Natural killer cell (primary cell): ENCODE measurements at regions of chr1 and their contacts with region 1.

Region 1: DNA sequence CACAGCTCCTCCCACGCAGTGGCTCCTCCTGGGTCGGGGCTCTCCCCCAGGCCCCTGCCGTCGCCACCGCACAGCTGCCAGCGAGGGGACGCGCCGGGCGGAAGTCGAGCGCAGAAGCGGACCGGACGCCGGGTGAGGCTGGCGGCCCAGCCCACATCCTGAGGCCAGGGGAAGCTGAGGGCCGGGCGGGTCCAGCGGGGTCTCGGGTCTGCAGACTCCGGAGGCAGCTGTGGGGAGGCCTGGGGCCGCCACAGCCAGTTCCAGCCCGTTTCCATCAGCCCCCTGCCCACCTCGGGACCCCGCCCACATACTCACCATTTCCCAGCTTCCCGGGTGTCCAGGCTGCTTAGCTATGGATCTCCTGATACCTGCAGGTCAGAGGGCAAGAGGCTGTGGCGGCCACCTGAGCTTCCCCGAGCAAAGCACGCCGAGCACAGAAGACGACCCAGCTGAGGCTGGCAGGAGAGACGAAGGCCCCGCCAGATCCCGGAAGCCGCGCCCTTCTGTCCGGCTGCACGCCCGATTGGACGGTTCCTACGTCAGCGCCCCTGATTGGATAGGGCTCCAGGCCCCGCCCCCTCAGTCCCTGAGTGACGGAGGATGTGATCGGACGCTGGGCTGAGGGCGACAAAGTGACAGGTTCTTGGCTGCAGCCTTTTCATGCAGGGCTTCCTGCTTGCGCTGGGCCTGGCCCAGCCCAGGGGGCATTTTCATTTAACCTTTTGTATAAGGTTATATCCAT is 38.7 kb upstream of the ZNF124 start:
- DNase-seq: peak; percentile 96 to 97
- ATAC-seq: peak; percentile 96 to 99 (median 97)
- H3K4me3 ChIP-seq: peak overlapping the region; percentile 97
- H3K4me3 Mint-ChIP-seq: peak overlapping the region; percentile 98
- H3K27ac ChIP-seq: peak overlapping the region; percentile 99
- H3K27ac Mint-ChIP-seq: peak overlapping the region; percentile 93 to 96
- H3K4me1 ChIP-seq: peaks cover 35% of the 10 kb centered on the region
- H3K4me1 Mint-ChIP-seq: peaks cover 47 to 53% of the 10 kb centered on the region in 2 donors
- H3K27me3 ChIP-seq: no peaks in the 10 kb centered on the region
- H3K27me3 Mint-ChIP-seq: peaks cover 0 to 3% of the 10 kb centered on the region in 2 donors
- CTCF ChIP-seq: no peak

Region 2: DNA sequence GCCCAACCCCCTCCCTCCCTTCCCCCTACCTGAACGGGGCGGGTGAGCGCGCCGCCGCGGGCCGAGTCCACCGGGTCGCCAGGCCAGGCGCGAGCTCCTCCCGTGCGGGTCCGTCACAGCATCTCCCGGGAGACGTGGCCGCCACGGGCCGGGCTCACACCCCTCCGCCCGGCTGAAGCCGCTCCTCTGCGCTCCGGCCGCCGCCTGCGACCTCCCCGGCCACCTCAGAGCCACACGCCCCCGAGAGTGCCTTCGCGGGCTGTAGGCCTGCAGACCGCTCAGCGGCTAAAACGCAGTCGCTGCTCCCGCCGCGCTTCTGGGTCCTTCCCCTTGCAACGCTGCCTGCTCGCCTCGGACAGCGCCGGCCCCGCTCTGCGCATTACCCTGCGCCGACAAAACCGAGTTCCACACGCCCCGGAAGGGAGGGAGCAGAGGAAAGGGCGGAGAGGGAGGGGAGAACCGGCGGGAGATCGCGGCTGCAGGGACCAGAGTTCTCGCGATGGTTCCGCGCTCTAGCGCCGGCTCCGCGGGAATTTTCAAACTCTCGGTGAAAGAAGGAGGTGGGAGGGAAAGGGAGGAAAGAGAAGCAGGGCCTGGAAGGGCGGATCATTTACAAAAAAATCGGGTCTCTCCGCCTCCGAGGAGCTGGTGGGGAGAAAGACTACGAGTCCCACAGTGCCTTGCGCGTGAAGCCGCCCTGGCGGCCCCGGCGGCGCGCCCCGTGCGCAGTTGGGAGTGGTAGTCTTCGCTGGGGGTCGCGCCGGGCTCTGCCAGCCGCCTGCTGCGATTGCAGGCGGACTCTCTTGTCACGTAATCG is 278.8 kb before region 1 on chr1 and contains the start of gene AHCTF1:
- intact Hi-C with region 1: loop called (anchors 2 kb)
- DNase-seq: peak; percentile 85 to 98
- ATAC-seq: peak; percentile 85 to 96 (median 88)
- H3K4me3 ChIP-seq: peak within 1 kb of the TSS; percentile 85
- H3K4me3 Mint-ChIP-seq: peak within 1 kb of the TSS; percentile 96
- H3K27ac ChIP-seq: peak within 1 kb of the TSS; percentile 88
- H3K27ac Mint-ChIP-seq: peak within 1 kb of the TSS; percentile 91 to 94
- H3K4me1 ChIP-seq: peaks cover 15% of the 10 kb centered on the region
- H3K4me1 Mint-ChIP-seq: peaks cover 33 to 35% of the 10 kb centered on the region in 2 donors
- H3K27me3 ChIP-seq: no peaks in the 10 kb centered on the region
- H3K27me3 Mint-ChIP-seq: no peaks in the 10 kb centered on the region
- CTCF ChIP-seq: no peak
- total RNA-seq, gene AHCTF1: 46.5 to 50.2 (median 47.4) TPM

Region 3: DNA sequence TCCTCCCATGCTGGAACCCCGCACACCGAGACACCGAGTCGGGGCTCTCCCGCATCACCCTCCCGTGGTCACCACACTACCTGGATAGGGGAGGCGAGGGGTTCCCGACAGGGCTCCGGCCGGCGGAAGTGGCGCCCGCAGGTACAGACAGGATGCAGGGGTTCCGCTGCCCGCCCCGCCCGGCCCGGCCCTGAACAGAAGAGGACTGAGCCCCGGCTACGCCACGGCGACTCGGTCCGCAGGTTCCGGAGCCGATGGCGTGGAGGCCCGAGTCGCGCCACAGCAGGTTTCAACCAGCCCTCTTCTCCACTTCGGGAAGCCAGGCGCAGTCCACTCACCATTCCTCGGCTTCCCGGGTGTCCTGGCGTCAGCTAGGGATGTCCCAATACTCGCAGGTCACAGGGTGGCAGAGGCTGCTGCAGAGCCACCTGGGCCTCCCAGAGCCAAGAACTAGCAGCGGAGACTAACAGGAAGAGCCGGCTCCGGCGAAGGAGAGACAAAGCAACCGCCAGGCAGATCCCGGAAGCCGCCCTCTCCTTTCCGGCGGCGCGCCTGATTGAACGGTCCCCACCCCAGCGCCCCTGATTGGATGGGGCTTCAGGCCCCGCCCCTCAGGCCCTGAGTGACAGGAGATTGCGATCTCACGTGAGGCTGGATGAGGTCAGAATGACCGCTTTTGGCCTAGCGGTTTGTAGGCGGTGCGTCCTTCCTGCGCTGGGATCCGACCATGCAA is 106.5 kb before region 1 on chr1 and contains the start of gene ZNF669:
- intact Hi-C with region 1: loop called (anchors 2 kb)
- DNase-seq: peak; percentile 91 to 93
- ATAC-seq: peak; percentile 98 to 100 (median 99)
- H3K4me3 ChIP-seq: peak within 1 kb of the TSS; percentile 85
- H3K4me3 Mint-ChIP-seq: peak within 1 kb of the TSS; percentile 87
- H3K27ac ChIP-seq: peak within 1 kb of the TSS; percentile 75
- H3K27ac Mint-ChIP-seq: peak within 1 kb of the TSS; percentile 80 to 88
- H3K4me1 ChIP-seq: peaks cover 19% of the 10 kb centered on the region
- H3K4me1 Mint-ChIP-seq: peaks cover 17 to 18% of the 10 kb centered on the region in 2 donors
- H3K27me3 ChIP-seq: peaks cover 4% of the 10 kb centered on the region
- H3K27me3 Mint-ChIP-seq: peaks cover 23 to 27% of the 10 kb centered on the region in 2 donors
- CTCF ChIP-seq: no peak
- total RNA-seq, gene ZNF669: 16.2 to 18.3 (median 17.0) TPM

Region 4: DNA sequence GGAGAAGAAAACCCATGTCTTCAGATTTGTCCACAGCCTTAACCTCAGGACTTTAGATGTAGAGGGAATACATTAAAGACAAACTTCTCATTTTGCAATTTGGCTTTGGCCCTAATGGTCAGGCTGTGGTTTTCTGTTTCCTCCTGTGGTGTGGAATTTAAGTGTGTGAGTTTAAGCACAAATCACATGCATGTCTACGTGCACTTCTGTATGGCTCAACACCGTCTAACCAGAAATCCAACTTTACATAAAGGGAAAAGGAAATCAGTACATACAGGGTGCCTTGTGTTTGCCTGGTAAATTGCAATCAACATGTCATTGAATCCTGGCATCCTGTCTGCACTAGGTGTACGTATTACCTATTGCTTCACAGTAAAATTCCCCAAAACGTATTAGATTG is 37.6 kb before region 1 on chr1:
- intact Hi-C with region 1: loop called (anchors 5 kb)
- DNase-seq: peak in 1 of 2 donors; percentile 6
- ATAC-seq: no peak
- H3K4me3 ChIP-seq: no peak overlapping the region
- H3K4me3 Mint-ChIP-seq: peak overlapping the region; percentile 25
- H3K27ac ChIP-seq: no peak overlapping the region
- H3K27ac Mint-ChIP-seq: peak overlapping the region in 1 of 2 donors; percentile 45
- H3K4me1 ChIP-seq: peaks cover 13% of the 10 kb centered on the region
- H3K4me1 Mint-ChIP-seq: peaks cover 16 to 18% of the 10 kb centered on the region in 2 donors
- H3K27me3 ChIP-seq: no peaks in the 10 kb centered on the region
- H3K27me3 Mint-ChIP-seq: no peaks in the 10 kb centered on the region
- CTCF ChIP-seq: no peak

Region 5: GRCh38 chr1:247331172-247331991 is 120.8 kb after region 1 on chr1 and contains the start of gene ZNF496:
- intact Hi-C with region 1: loop called (anchors 5 kb)
- DNase-seq: peak; percentile 61 to 76
- ATAC-seq: peak; percentile 73 to 86 (median 77)
- H3K4me3 ChIP-seq: peak within 1 kb of the TSS; percentile 86
- H3K4me3 Mint-ChIP-seq: peak within 1 kb of the TSS; percentile 98
- H3K27ac ChIP-seq: peak within 1 kb of the TSS; percentile 53
- H3K27ac Mint-ChIP-seq: peak within 1 kb of the TSS; percentile 72 to 93
- H3K4me1 ChIP-seq: peaks cover 21% of the 10 kb centered on the region
- H3K4me1 Mint-ChIP-seq: peaks cover 14 to 40% of the 10 kb centered on the region in 2 donors
- H3K27me3 ChIP-seq: no peaks in the 10 kb centered on the region
- H3K27me3 Mint-ChIP-seq: no peaks in the 10 kb centered on the region
- CTCF ChIP-seq: no peak
- total RNA-seq, gene ZNF496: 25.6 to 33.0 (median 27.9) TPM